ENCODE measurements at regions of chr10 and their contacts with region 1.

Region 1: DNA sequence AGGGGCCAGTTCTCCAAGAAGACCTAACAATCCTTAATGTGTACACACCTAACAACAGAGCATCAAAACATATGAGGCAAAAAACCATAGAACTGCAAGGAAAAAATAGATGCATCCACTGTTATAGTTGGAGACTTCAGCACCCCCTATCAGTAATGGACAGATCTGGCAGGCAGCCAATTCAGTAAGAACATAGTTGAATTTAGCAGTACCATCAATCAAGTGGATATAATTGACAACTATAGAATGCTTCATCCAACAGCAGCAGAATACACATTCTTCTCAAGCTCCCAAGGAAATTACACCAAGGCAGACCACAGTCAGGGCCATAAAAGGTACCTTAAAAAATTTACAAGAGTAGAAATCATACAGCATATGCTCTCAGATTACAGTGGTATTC is 42.2 kb downstream of the POLL start:
- DNase-seq: no peak
- ATAC-seq: no peak
- H3K4me3 ChIP-seq: no peak overlapping the region
- H3K4me3 Mint-ChIP-seq: no peak overlapping the region
- H3K27ac ChIP-seq: no peak overlapping the region
- H3K27ac Mint-ChIP-seq: no peak overlapping the region
- H3K4me1 ChIP-seq: no peaks in the 10 kb centered on the region
- H3K4me1 Mint-ChIP-seq: no peaks in the 10 kb centered on the region
- H3K27me3 ChIP-seq: no peaks in the 10 kb centered on the region
- H3K27me3 Mint-ChIP-seq: no peaks in the 10 kb centered on the region

Region 2: GRCh38 chr10:100245484-100246220 is 1300.2 kb before region 1 on chr10:
- CTCF ChIA-PET with region 1: no interaction called
- POLR2A ChIA-PET with region 1: interaction called in 1 of 2 experiments, 11 read pairs
- DNase-seq: no peak
- ATAC-seq: no peak
- H3K4me3 ChIP-seq: no peak overlapping the region
- H3K4me3 Mint-ChIP-seq: no peak overlapping the region
- H3K27ac ChIP-seq: no peak overlapping the region
- H3K27ac Mint-ChIP-seq: no peak overlapping the region
- H3K4me1 ChIP-seq: no peaks in the 10 kb centered on the region
- H3K4me1 Mint-ChIP-seq: peaks cover 0 to under 1% (median under 1%) of the 10 kb centered on the region in 3 donors
- H3K27me3 ChIP-seq: no peaks in the 10 kb centered on the region
- H3K27me3 Mint-ChIP-seq: no peaks in the 10 kb centered on the region

Region 3: GRCh38 chr10:100791369-100792058 is 754.4 kb before region 1 on chr10:
- CTCF ChIA-PET with region 1: no interaction called
- POLR2A ChIA-PET with region 1: no interaction called
- DNase-seq: no peak
- ATAC-seq: no peak
- H3K4me3 ChIP-seq: no peak overlapping the region
- H3K4me3 Mint-ChIP-seq: no peak overlapping the region
- H3K27ac ChIP-seq: no peak overlapping the region
- H3K27ac Mint-ChIP-seq: no peak overlapping the region
- H3K4me1 ChIP-seq: no peaks in the 10 kb centered on the region
- H3K4me1 Mint-ChIP-seq: no peaks in the 10 kb centered on the region
- H3K27me3 ChIP-seq: peaks cover 0 to 49% of the 10 kb centered on the region in 2 experiments
- H3K27me3 Mint-ChIP-seq: peaks cover 40 to 50% of the 10 kb centered on the region in 2 donors

Region 4: GRCh38 chr10:101367569-101368453 is 178.1 kb before region 1 on chr10:
- CTCF ChIA-PET with region 1: no interaction called
- POLR2A ChIA-PET with region 1: interaction called in 1 of 2 experiments, 14 read pairs
- DNase-seq: no peak
- ATAC-seq: no peak
- H3K4me3 ChIP-seq: no peak overlapping the region
- H3K4me3 Mint-ChIP-seq: no peak overlapping the region
- H3K27ac ChIP-seq: no peak overlapping the region
- H3K27ac Mint-ChIP-seq: no peak overlapping the region
- H3K4me1 ChIP-seq: no peaks in the 10 kb centered on the region
- H3K4me1 Mint-ChIP-seq: peaks cover 25 to 29% (median 27%) of the 10 kb centered on the region in 3 donors
- H3K27me3 ChIP-seq: no peaks in the 10 kb centered on the region
- H3K27me3 Mint-ChIP-seq: no peaks in the 10 kb centered on the region

Measured in T-cell (primary cell).